Calu3 (cell line): ENCODE measurements at regions of chr6 and their contacts with region 1.

Region 1: DNA sequence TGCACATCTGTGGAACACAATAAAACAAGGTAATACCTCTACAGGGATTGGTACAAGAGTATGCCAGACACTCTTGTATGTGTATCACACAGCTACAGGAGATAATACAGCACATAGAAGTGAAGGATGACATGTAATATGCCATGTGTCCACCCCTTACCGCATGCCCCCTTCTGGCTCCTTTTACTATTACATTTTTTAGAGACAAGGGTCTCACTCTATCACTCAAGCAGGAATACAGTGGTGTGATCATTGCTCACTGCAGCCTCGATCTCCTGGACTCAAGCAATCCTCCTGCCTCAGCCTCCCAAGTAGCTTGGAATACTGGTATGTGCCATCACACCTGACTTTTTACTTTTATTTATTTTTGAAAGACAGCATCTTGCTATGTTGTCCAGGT is 4.2 kb upstream of the NCR3 start:
- DNase-seq: peak; percentile 45
- H3K4me3 Mint-ChIP-seq: no peak overlapping the region
- H3K27ac Mint-ChIP-seq: no peak overlapping the region
- H3K4me1 Mint-ChIP-seq: peaks cover 8% of the 10 kb centered on the region
- H3K27me3 Mint-ChIP-seq: no peaks in the 10 kb centered on the region
- CTCF ChIP-seq: peak; percentile 75

Region 2: DNA sequence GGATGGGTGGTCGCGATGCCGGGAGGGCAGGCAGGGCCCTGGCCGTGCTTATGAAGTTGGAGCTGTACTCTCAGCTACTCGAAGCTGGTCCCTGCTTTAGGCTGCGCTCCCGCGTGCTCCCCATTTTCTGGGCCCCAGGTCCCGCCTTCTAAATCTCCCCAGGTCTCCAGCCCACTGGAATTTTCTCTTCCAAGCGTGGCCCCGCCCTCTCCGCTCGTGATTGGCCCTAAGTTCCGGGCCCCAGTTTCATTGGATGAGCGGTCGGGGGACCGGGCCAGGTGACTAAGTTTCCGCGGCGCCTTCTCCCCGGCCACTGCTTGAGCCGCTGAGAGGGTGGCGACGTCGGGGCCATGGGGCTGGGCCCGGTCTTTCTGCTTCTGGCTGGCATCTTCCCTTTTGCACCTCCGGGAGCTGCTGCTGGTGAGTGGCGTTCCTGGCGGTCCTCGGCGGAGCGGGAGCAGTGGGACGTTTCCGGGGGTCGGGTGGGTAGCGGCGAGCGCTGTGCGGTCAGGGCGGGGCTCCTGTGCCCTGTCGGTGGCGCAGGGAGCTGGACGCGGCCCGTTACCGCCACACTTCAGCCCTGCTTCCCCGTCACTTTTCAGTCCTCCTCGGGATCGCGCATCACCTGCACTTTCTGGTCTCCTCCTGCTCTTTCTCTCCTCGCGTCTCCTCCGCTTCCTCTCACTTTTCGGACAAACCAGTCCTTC is 193.6 kb before region 1 on chr6 and contains the start of gene MICA:
- CTCF ChIA-PET with region 1: interaction called, 4 read pairs
- intact Hi-C with region 1: loop called (anchors 5 kb)
- DNase-seq: peak; percentile 99
- H3K4me3 Mint-ChIP-seq: peak within 1 kb of the TSS; percentile 95
- H3K27ac Mint-ChIP-seq: peak within 1 kb of the TSS; percentile 64
- H3K4me1 Mint-ChIP-seq: peaks cover 67% of the 10 kb centered on the region
- H3K27me3 Mint-ChIP-seq: no peaks in the 10 kb centered on the region
- CTCF ChIP-seq: peak; percentile 40
- total RNA-seq, gene MICA: 70.2 and 77.1 TPM in 2 replicates

Region 3: DNA sequence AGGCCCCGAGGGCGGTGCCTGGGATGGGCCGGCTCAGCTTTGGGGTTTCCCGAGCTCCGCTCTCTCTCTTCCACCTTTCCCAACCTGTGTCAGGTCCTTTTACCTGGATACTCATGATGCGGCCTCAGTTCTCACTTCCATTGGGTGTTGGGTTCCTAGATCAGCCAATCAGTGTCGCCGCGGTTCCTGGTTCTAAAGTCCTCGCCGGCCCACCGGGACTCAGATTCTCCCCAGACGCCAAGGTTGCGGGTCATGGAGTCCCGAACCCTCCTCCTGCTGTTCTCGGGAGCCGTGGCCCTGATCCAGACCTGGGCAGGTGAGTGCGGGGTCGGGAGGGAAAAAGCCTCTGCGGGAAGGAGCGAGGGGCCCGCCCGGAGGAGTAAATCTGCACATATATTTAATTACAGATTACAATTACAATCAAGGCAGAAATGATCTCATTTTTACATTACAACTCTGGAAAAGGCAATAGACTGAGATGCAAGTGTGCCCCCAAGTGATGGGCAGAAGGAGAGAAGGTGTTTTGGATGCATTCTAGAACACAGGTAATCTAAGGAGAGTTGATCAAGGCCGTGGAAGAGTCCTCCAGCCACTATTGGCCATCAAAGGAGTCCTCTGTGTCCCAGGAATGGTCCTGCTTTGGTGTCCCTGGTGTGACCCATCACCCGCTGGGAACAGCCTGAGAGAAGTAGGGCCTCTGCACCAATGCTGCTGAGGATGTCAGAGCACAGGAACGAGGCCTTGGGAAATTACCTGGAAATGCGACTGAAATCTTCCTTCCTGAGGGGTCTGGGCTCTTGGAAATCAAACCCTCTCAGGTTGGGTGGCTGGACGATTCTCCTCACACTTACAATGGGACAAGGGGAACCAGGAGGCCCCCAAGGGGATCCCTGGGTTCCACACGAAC is 133.8 kb before region 1 on chr6:
- CTCF ChIA-PET with region 1: no interaction called
- intact Hi-C with region 1: no loop called
- DNase-seq: peak; percentile 95
- H3K4me3 Mint-ChIP-seq: peak overlapping the region; percentile 78
- H3K27ac Mint-ChIP-seq: peak overlapping the region; percentile 74
- H3K4me1 Mint-ChIP-seq: peaks cover 21% of the 10 kb centered on the region
- H3K27me3 Mint-ChIP-seq: peaks cover 25% of the 10 kb centered on the region
- CTCF ChIP-seq: no peak

Region 4: GRCh38 chr6:31493875-31494694 is 102.9 kb before region 1 on chr6:
- CTCF ChIA-PET with region 1: interaction called, 20 read pairs
- intact Hi-C with region 1: loop called (anchors 1 kb)
- DNase-seq: peak; percentile 94
- H3K4me3 Mint-ChIP-seq: peak overlapping the region; percentile 56
- H3K27ac Mint-ChIP-seq: peak overlapping the region; percentile 0
- H3K4me1 Mint-ChIP-seq: peaks cover 42% of the 10 kb centered on the region
- H3K27me3 Mint-ChIP-seq: no peaks in the 10 kb centered on the region
- CTCF ChIP-seq: peak; percentile 78

Region 5: DNA sequence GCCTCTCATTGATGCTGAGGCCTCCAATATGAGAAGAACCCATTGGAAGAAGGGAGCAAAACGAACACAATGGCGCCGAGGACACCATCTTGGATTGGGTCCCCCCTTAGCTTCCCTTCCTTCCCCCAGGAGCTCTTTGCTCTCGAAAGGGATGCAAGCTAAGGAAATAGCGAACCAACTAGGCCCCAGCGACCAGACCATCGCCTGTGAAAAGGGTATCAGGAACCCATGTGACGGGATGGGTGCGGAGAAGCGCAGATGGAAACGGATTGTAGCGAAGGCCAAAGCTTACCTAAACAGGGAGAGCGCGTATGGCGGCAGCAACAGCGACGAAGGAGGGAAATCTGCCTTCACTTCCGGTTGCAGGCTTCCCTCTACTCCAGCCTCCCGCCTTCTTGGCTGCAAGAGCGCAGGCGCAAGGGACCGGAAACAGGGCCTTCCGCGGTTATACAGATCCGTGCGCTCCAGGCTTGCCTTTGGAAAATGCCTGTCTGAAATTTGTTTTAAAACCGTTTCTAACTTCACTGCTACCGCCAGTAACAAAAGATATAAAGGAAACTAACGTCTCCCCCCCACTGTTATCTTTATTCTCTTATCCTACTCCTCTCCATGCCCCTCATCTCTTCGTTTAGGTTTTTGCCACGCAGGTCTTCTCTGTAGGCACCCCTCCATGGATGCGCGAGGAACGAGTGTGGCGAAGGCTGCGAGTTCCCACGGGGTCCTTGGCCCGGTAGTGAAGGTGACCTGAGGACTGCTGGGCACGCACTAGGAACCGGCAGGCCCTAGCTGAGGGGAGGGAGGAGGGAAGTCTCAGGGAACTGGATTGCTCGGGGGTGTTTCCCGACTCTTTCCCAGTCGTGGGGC is 55.1 kb before region 1 on chr6 and contains the start of gene DDX39B:
- CTCF ChIA-PET with region 1: interaction called, 54 read pairs
- intact Hi-C with region 1: loop called (anchors 1 kb)
- DNase-seq: peak; percentile 98
- H3K4me3 Mint-ChIP-seq: peak within 1 kb of the TSS; percentile 70
- H3K27ac Mint-ChIP-seq: peak within 1 kb of the TSS; percentile 88
- H3K4me1 Mint-ChIP-seq: peaks cover 36% of the 10 kb centered on the region
- H3K27me3 Mint-ChIP-seq: no peaks in the 10 kb centered on the region
- CTCF ChIP-seq: peak; percentile 7
- total RNA-seq, gene DDX39B: 631 and 646 TPM in 2 replicates

Region 6: GRCh38 chr6:31546962-31547726 is 49.9 kb before region 1 on chr6 and contains the start of gene NFKBIL1:
- CTCF ChIA-PET with region 1: interaction called, 84 read pairs
- intact Hi-C with region 1: loop called (anchors 1 kb)
- DNase-seq: peak; percentile 98
- H3K4me3 Mint-ChIP-seq: peak within 1 kb of the TSS; percentile 71
- H3K27ac Mint-ChIP-seq: peak within 1 kb of the TSS; percentile 43
- H3K4me1 Mint-ChIP-seq: peaks cover 17% of the 10 kb centered on the region
- H3K27me3 Mint-ChIP-seq: no peaks in the 10 kb centered on the region
- CTCF ChIP-seq: no peak
- total RNA-seq, gene NFKBIL1: 33.5 and 34.0 TPM in 2 replicates

Region 7: DNA sequence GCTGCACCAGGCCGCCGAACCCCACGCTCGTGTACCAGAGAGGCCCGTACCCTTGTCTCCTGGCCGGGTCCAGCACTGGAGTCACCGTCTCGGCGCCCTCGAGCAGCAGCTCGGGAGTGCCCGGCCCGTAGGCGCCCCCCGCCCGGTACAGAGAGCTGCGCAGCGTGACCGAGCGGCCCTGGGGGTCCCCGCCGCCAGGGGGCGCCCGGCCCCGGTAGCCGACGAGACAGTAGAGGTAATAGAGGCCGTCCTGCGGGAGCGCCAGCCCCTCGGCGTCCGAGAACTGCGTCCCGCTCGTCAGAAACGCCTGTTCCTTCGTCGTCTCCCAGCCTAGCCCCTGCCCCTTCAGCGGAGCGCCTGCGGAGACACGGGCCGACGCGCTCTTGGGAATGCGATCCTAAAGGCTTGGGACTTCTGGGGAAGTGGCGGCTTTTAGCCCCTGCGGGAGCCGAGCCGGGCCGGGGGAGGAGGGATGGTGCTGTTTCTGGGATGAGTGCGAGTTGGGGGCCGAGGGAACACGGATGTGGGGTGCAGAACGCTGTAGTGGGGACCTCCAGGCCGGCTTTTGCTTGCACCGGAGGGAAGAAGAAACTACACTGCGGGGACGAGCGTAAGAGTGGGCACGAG is 16.1 kb before region 1 on chr6:
- CTCF ChIA-PET with region 1: interaction called, 34 read pairs
- intact Hi-C with region 1: loop called (anchors 1 kb)
- DNase-seq: peak; percentile 98
- H3K4me3 Mint-ChIP-seq: peak overlapping the region; percentile 91
- H3K27ac Mint-ChIP-seq: peak overlapping the region; percentile 43
- H3K4me1 Mint-ChIP-seq: peaks cover 26% of the 10 kb centered on the region
- H3K27me3 Mint-ChIP-seq: peaks cover 33% of the 10 kb centered on the region
- CTCF ChIP-seq: peak; percentile 100

Region 8: GRCh38 chr6:31586599-31587281 is 10.3 kb before region 1 on chr6:
- CTCF ChIA-PET with region 1: interaction called, 29 read pairs
- intact Hi-C with region 1: loop called (anchors 1 kb)
- DNase-seq: no peak
- H3K4me3 Mint-ChIP-seq: no peak overlapping the region
- H3K27ac Mint-ChIP-seq: no peak overlapping the region
- H3K4me1 Mint-ChIP-seq: peaks cover 11% of the 10 kb centered on the region
- H3K27me3 Mint-ChIP-seq: peaks cover 40% of the 10 kb centered on the region
- CTCF ChIP-seq: no peak